ENCODE measurements at regions of chr20 and their contacts with region 1.

Region 1: DNA sequence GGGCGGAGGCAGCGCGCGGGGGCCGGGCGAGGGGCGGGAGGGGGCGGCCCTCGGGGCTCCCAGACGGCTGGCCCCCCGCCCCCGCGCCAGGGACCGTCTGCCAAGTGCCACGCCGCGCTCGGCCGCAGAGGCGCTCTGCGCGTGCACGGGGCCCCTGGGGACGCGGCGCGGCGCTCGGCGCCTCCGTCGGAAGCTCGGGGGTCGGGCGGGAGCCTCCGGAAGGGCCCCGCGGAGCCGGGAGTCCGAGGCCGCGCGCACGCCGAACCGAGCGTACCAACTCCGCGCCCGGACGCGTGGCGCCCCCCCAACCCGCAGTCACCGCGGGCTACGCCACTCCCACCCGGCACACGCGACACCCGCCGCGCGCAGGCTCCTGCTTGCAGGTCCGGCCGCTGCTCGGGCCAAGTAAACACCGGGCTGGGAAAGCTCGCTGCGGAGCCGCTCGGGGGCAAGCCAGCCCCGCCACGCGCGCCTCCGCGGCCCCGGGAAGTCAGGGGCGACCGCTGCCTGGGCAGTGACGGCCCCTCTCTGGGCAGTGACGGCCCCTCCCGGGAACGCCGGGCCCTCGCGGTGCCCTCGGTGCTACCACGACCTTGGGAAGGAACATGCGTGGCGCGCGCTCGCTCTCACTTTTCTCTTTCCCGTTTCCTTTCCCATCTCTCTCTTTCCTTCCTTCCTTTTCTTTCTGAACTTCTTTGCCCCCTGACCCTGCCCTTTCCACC is 384 bp upstream of the PREX1 start:
- DNase-seq: peak; percentile 82 to 89 (median 86)
- H3K4me3 ChIP-seq: peak overlapping the region in 1 of 2 donors; percentile 40
- H3K4me3 Mint-ChIP-seq: peak overlapping the region; percentile 87 to 94 (median 90)
- H3K27ac ChIP-seq: peak overlapping the region; percentile 35
- H3K27ac Mint-ChIP-seq: peak overlapping the region; percentile 82 to 95 (median 91)
- H3K4me1 ChIP-seq: peaks cover 30% of the 10 kb centered on the region
- H3K4me1 Mint-ChIP-seq: peaks cover 9 to 25% (median 16%) of the 10 kb centered on the region in 4 donors
- H3K27me3 ChIP-seq: no peaks in the 10 kb centered on the region
- H3K27me3 Mint-ChIP-seq: no peaks in the 10 kb centered on the region

Region 2: DNA sequence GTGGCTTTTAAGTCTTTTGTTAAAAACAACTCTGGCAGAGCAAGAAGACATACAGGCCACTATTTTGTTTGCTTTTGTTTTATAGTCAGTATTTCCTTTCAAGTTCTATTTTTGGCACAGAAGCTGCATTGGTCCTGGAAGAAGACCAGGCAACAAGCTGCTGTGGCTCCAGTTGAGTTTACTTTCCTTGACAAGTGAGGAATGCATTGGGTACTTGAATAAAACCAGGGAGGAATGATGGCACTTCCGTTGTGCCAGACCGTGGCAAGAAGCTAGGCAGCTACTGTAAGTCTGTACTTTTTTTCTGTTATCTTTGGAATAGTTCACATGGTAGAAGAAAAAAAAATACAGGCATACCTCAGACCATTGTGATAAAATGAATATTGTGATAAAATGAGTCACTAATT is 1260.2 kb before region 1 on chr20:
- CTCF ChIA-PET with region 1: no interaction called
- POLR2A ChIA-PET with region 1: no interaction called
- intact Hi-C with region 1: no loop called
- DNase-seq: no peak
- H3K4me3 ChIP-seq: no peak overlapping the region
- H3K4me3 Mint-ChIP-seq: peak overlapping the region in 1 of 8 donors; percentile 25
- H3K27ac ChIP-seq: no peak overlapping the region
- H3K27ac Mint-ChIP-seq: peak overlapping the region in 5 of 7 donors; percentile 24 to 83 (median 57)
- H3K4me1 ChIP-seq: peaks cover 44% of the 10 kb centered on the region
- H3K4me1 Mint-ChIP-seq: peaks cover 35 to 61% (median 44%) of the 10 kb centered on the region in 4 donors
- H3K27me3 ChIP-seq: no peaks in the 10 kb centered on the region
- H3K27me3 Mint-ChIP-seq: no peaks in the 10 kb centered on the region

Region 3: DNA sequence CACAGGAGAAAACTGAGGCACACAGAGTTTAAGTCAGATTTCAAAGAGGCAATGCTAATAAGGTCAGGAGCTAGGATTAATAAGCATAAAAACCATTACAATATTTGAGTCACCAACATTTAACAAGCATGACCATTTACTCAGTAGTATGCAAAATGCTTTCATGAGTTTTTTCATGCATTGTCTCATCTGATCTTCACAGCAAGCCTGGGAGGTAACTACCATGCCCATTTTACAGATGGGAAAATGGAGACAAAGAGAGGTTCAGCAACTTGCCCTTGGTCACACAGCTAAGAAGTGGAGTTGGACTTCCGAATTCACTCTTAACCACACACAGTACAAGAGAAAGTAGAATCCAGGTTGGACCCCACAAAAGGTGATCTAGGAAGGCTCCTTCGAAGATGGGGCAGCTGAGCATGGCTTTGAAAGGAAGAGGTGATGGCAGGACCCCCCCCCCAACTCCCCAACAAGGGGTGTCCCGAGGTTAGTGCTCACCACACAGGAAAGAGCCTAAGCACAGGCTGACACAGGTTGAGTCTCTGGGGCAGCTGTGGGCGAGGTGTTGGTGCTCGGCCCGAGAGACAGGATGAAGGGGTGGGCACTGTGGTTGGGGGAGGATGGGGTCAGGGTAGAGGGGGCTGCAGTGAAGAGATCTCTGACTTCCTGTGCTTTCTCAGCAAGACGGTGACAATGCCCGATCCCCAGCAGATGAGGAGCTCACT is 109.2 kb before region 1 on chr20:
- CTCF ChIA-PET with region 1: interaction called, 3 read pairs
- POLR2A ChIA-PET with region 1: interaction called, 23 read pairs
- intact Hi-C with region 1: loop called (anchors 2 kb)
- DNase-seq: peak; percentile 36 to 63 (median 41)
- H3K4me3 ChIP-seq: peak overlapping the region in 1 of 2 donors; percentile 26
- H3K4me3 Mint-ChIP-seq: peak overlapping the region; percentile 41 to 83 (median 76)
- H3K27ac ChIP-seq: peak overlapping the region; percentile 41
- H3K27ac Mint-ChIP-seq: peak overlapping the region; percentile 90 to 95 (median 92)
- H3K4me1 ChIP-seq: peaks cover 100% of the 10 kb centered on the region
- H3K4me1 Mint-ChIP-seq: peaks cover 83 to 99% (median 91%) of the 10 kb centered on the region in 4 donors
- H3K27me3 ChIP-seq: no peaks in the 10 kb centered on the region
- H3K27me3 Mint-ChIP-seq: no peaks in the 10 kb centered on the region

Region 4: GRCh38 chr20:48750947-48751635 is 77.1 kb before region 1 on chr20:
- CTCF ChIA-PET with region 1: interaction called, 8 read pairs
- POLR2A ChIA-PET with region 1: interaction called, 48 read pairs
- intact Hi-C with region 1: no loop called
- DNase-seq: peak; percentile 53 to 73 (median 58)
- H3K4me3 ChIP-seq: peak overlapping the region; percentile 39
- H3K4me3 Mint-ChIP-seq: peak overlapping the region; percentile 65 to 85 (median 75)
- H3K27ac ChIP-seq: peak overlapping the region; percentile 55
- H3K27ac Mint-ChIP-seq: peak overlapping the region; percentile 84 to 95 (median 89)
- H3K4me1 ChIP-seq: peaks cover 76% of the 10 kb centered on the region
- H3K4me1 Mint-ChIP-seq: peaks cover 53 to 89% (median 76%) of the 10 kb centered on the region in 4 donors
- H3K27me3 ChIP-seq: no peaks in the 10 kb centered on the region
- H3K27me3 Mint-ChIP-seq: no peaks in the 10 kb centered on the region

Region 5: GRCh38 chr20:48769069-48769879 is 58.9 kb before region 1 on chr20:
- CTCF ChIA-PET with region 1: no interaction called
- POLR2A ChIA-PET with region 1: interaction called, 12 read pairs
- intact Hi-C with region 1: no loop called
- DNase-seq: peak; percentile 79 to 99 (median 82)
- H3K4me3 ChIP-seq: no peak overlapping the region
- H3K4me3 Mint-ChIP-seq: peak overlapping the region; percentile 50 to 75 (median 62)
- H3K27ac ChIP-seq: peak overlapping the region; percentile 83
- H3K27ac Mint-ChIP-seq: peak overlapping the region; percentile 84 to 98 (median 96)
- H3K4me1 ChIP-seq: peaks cover 89% of the 10 kb centered on the region
- H3K4me1 Mint-ChIP-seq: peaks cover 58 to 94% (median 78%) of the 10 kb centered on the region in 4 donors
- H3K27me3 ChIP-seq: no peaks in the 10 kb centered on the region
- H3K27me3 Mint-ChIP-seq: no peaks in the 10 kb centered on the region

Region 6: DNA sequence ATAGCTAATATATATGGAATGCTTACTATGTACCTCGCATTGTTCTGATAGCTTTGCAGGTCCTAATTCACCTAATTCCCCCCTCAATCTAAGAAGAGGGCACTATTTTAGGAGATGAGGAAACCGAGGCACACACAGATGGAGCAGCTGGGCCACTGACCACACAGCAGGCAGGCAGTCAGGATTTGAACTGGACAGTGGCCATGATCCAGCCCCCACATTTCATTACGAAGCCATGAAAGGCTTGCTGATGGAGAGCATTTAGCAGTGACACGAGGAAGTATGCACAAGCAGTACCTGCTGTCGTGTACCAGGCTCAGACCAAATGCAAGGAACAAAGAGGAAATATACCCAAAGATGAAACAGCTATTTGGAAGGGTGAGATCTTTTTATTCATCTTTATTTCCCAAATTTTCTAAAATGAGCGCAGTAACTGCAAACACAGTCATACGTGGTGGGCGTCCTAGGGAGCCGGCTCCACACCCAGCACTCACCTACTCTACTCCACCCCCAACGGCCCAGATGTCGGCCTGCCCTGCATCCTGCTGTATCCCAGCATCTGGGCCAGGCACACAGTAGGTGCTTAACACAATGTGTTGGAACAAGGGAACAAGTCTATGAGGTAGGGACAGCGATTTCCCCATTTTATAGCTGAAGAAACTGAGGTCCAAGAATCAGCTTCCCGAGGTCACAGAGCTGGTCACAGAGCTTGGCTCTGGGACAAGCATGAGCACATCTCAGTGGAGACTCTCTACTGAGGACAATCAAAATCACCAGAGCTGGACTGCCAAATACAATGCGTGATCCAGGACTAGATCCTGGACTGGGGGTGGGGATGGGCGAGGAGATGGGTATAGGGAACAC is 15.4 kb before region 1 on chr20:
- CTCF ChIA-PET with region 1: interaction called, 3 read pairs
- POLR2A ChIA-PET with region 1: interaction called, 65 read pairs
- intact Hi-C with region 1: loop called (anchors 2 kb)
- DNase-seq: no peak
- H3K4me3 ChIP-seq: no peak overlapping the region
- H3K4me3 Mint-ChIP-seq: no peak overlapping the region
- H3K27ac ChIP-seq: peak overlapping the region; percentile 32
- H3K27ac Mint-ChIP-seq: no peak overlapping the region
- H3K4me1 ChIP-seq: peaks cover 92% of the 10 kb centered on the region
- H3K4me1 Mint-ChIP-seq: peaks cover 25 to 47% (median 32%) of the 10 kb centered on the region in 4 donors
- H3K27me3 ChIP-seq: no peaks in the 10 kb centered on the region
- H3K27me3 Mint-ChIP-seq: no peaks in the 10 kb centered on the region

Region 7: DNA sequence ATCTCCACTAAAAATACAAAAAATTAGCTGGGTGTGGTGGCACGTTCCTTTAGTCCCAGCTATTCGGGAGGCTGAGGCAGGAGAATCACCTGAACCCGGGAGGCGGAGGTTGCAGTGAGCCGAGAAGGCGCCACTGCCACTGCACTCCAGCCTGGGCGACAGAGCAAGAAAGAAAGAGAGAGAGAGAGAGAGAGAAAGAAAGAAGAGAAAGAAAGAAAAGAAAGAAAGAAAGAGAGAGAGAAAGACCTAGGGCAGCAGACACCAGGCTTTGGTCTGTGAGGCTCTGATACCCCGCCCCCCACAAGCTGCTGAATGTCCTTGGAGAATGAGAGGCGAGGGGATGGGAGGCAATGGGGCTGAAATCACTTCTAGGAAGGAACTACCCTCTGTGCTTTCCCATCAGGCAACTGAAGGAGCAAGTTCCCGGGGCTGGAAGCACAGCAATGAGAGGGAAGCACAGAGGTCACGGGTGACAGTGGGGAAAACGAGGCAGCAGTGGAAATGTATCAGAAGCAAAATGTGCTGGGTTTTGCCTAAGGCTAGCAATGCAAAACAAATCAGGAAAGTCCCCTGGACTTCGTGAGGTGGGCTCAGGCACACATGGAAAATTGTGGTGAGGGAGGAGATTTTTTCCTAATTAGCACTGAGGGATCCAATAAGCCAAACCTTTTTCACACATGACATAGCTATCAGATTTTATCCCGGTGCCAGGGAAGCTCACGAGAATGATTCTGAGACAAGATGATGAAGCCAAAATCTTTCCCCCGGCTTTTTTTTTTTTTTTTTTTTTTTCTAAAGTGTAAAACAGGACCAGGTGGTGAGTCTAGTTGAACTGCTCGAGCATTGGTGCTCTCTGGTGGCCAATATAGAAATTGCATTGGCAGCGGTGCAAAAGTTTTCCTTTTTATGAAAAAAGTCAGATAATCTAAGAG is 76.4 kb after region 1 on chr20:
- CTCF ChIA-PET with region 1: interaction called, 3 read pairs
- POLR2A ChIA-PET with region 1: no interaction called
- intact Hi-C with region 1: loop called (anchors 5 kb)
- DNase-seq: peak; percentile 64 to 69 (median 67)
- H3K4me3 ChIP-seq: no peak overlapping the region
- H3K4me3 Mint-ChIP-seq: no peak overlapping the region
- H3K27ac ChIP-seq: no peak overlapping the region
- H3K27ac Mint-ChIP-seq: peak overlapping the region in 3 of 7 donors; percentile 27 to 81 (median 58)
- H3K4me1 ChIP-seq: peaks cover 6% of the 10 kb centered on the region
- H3K4me1 Mint-ChIP-seq: peaks cover 2 to 6% (median 5%) of the 10 kb centered on the region in 4 donors
- H3K27me3 ChIP-seq: no peaks in the 10 kb centered on the region
- H3K27me3 Mint-ChIP-seq: no peaks in the 10 kb centered on the region